Activated naive CD4-positive, alpha-beta T cell treated with anti-CD3 and anti-CD28 coated beads for 36 hours (primary cell): ENCODE measurements at regions of chr10 and their contacts with region 1.

Region 1: DNA sequence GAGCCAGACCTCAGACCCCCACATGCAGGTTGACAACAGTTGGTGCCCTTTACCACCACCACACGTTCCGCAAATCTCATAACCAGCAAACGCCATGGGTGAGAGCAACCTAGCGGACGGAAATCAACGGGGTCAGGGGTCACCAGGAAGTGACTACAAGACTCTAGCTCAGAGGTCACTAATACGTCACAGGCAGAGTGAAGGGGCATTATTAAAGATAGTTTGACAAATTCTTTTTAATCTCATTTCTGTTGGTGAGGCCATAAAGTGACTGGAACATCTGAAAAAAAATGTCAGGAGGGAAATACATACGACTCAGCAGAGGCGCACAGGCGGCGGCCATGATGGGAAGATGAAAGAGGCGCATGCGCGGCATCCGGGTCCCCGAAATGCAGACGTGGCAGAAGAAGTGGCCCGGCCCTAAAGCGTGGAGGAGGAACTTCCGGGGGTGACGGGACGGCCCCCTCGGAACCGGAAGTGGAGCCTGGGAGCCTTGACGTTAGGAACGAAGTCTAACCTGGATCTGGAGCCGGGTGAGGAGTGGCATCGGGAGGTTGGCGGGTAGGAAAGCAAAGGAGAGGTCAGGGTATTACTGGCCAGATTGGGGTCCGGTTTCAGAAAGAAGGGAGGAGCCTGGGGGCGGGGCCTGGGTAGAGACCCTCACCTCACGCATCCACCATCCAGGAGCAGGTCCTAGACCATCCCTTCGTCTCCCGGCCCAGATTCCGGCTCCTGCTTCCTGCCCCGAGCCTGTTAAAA is at the start of gene SEC24C:
- DNase-seq: peak; percentile 98
- H3K4me3 Mint-ChIP-seq: peak within 1 kb of the TSS; percentile 98
- H3K27ac Mint-ChIP-seq: peak within 1 kb of the TSS; percentile 100
- H3K4me1 Mint-ChIP-seq: peaks cover 44% of the 10 kb centered on the region
- H3K27me3 Mint-ChIP-seq: no peaks in the 10 kb centered on the region
- total RNA-seq, gene SEC24C: 67.0 to 68.1 TPM

Region 2: GRCh38 chr10:73246783-73247508 is 497.1 kb before region 1 on chr10 and contains the start of gene DNAJC9:
- CTCF ChIA-PET with region 1: no interaction called
- intact Hi-C with region 1: loop called (anchors 1 kb)
- DNase-seq: peak; percentile 98
- H3K4me3 Mint-ChIP-seq: peak within 1 kb of the TSS; percentile 100
- H3K27ac Mint-ChIP-seq: peak within 1 kb of the TSS; percentile 97
- H3K4me1 Mint-ChIP-seq: peaks cover 67% of the 10 kb centered on the region
- H3K27me3 Mint-ChIP-seq: no peaks in the 10 kb centered on the region
- total RNA-seq, gene DNAJC9: 55.2 to 57.2 TPM

Region 3: GRCh38 chr10:73413528-73414229 is 330.4 kb before region 1 on chr10 and contains the start of gene ANXA7:
- CTCF ChIA-PET with region 1: no interaction called
- intact Hi-C with region 1: loop called (anchors 5 kb)
- DNase-seq: peak; percentile 96
- H3K4me3 Mint-ChIP-seq: peak within 1 kb of the TSS; percentile 95
- H3K27ac Mint-ChIP-seq: peak within 1 kb of the TSS; percentile 93
- H3K4me1 Mint-ChIP-seq: peaks cover 56% of the 10 kb centered on the region
- H3K27me3 Mint-ChIP-seq: peaks cover 5% of the 10 kb centered on the region
- total RNA-seq, gene ANXA7: 130 to 134 TPM

Region 4: DNA sequence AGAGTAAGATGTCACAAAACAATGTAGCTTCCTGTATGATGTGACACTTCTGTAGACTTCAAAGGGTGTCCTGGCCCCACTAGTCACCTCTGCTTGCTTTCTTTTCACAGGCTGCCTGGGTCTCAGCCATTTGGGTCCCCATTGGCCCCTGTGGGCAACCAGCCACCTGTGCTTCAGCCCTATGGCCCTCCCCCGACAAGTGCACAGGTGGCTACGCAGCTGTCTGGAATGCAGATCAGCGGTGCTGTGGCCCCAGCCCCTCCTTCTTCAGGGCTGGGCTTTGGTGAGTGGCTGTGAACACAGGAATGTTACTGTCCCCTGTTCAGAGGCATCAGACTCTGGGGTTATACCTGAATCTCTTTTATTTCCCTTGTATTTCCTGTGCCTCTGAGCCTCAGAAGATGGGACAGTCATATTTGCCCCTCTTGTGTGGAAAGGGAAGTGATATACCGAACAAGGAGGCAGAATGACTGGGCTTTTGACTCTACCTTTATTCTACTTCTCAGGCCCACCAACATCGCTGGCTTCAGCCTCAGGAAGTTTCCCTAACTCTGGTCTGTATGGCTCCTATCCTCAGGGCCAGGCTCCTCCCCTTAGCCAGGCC is 15.5 kb after region 1 on chr10:
- CTCF ChIA-PET with region 1: no interaction called
- intact Hi-C with region 1: loop called (anchors 1 kb)
- DNase-seq: peak; percentile 73
- H3K4me3 Mint-ChIP-seq: no peak overlapping the region
- H3K27ac Mint-ChIP-seq: peak overlapping the region; percentile 82
- H3K4me1 Mint-ChIP-seq: peaks cover 57% of the 10 kb centered on the region
- H3K27me3 Mint-ChIP-seq: no peaks in the 10 kb centered on the region

Region 5: GRCh38 chr10:73785221-73785720 is 41.2 kb after region 1 on chr10 and contains the start of gene ZSWIM8:
- CTCF ChIA-PET with region 1: no interaction called
- intact Hi-C with region 1: loop called (anchors 1 kb)
- DNase-seq: peak; percentile 89
- H3K4me3 Mint-ChIP-seq: peak within 1 kb of the TSS; percentile 98
- H3K27ac Mint-ChIP-seq: peak within 1 kb of the TSS; percentile 97
- H3K4me1 Mint-ChIP-seq: peaks cover 42% of the 10 kb centered on the region
- H3K27me3 Mint-ChIP-seq: no peaks in the 10 kb centered on the region
- total RNA-seq, gene ZSWIM8: 25.8 to 26.7 TPM

Region 6: DNA sequence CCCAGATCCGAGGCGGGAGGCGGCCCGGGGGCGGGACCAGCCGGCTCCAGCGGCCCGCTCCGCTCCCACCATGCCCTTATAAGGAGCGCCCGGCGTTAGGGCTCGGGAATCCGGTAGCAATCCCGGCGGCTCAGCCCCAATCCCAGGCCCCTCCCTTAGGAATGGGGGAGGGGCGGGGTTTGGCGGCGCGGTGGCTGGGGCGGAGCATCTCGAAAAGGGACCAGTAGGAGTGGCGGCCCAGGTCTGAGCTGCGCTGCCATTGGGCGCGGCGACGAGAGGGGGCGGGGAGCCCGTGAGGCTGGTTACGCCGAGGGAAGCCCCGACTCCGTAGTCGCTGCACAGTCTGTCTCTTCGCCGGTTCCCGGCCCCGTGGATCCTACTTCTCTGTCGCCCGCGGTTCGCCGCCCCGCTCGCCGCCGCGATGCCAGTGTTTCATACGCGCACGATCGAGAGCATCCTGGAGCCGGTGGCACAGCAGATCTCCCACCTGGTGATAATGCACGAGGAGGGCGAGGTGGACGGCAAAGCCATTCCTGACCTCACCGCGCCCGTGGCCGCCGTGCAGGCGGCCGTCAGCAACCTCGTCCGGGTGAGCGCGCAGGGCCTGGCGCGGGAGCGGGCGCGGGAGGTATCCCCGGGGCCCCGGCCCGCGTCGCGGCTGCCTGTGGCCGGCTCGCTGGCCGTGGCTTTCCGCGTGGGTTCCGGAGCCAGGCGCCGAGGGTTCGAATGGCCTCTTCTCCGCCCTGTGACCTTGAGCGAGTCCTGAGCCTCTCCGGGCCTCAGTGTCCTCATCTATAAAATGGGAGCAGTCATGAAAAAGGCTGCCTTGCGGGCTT is 253.9 kb after region 1 on chr10 and contains the start of gene VCL:
- CTCF ChIA-PET with region 1: no interaction called
- intact Hi-C with region 1: no loop called
- DNase-seq: peak; percentile 96
- H3K4me3 Mint-ChIP-seq: peak within 1 kb of the TSS; percentile 86
- H3K27ac Mint-ChIP-seq: peak within 1 kb of the TSS; percentile 89
- H3K4me1 Mint-ChIP-seq: peaks cover 26% of the 10 kb centered on the region
- H3K27me3 Mint-ChIP-seq: no peaks in the 10 kb centered on the region
- total RNA-seq, gene VCL: 13.4 to 14.4 TPM